Dorsolateral prefrontal cortex (tissue), 120 donors: ENCODE measurements at regions of chr1 and their contacts with region 1.

Region 1: DNA sequence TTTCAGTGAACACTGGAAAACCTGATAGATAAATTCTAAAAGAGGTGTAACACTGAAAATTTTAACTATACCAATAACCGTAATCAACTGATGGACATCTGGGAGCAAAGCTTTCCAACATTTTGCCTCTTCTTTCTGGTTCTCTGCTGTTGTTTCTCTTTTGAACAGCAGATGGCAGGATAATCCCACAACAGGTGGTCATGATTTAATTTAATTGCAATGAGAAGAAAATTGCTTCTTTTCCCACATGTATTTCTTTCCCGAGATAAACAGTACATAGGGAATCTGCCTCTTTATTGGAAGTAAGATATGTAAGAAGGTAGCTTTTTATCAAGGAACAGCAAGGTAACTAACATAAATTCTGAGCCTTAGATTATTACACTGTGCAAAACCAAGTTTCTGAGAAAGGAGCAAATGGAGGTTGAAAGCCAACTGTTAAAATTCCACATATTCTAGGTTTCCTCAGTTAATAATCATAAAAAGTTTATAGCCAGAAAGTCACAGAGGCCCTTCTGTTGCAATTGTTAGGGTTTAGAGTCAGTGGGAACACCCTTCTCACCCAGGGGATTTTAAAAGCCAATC is 72.9 kb downstream of the RPS6KA1 start:
- DNase-seq: peak in 2 of 10 donors; percentile 31 to 42
- H3K4me3 ChIP-seq: peak overlapping the region in 3 of 59 donors; percentile 0 to 39 (median 34)
- H3K27ac ChIP-seq: peak overlapping the region in 2 of 59 donors; percentile 4 to 5
- H3K27me3 ChIP-seq: no peaks in the 10 kb centered on the region
- CTCF ChIP-seq: peak; percentile 82 to 99 (median 94)

Region 2: DNA sequence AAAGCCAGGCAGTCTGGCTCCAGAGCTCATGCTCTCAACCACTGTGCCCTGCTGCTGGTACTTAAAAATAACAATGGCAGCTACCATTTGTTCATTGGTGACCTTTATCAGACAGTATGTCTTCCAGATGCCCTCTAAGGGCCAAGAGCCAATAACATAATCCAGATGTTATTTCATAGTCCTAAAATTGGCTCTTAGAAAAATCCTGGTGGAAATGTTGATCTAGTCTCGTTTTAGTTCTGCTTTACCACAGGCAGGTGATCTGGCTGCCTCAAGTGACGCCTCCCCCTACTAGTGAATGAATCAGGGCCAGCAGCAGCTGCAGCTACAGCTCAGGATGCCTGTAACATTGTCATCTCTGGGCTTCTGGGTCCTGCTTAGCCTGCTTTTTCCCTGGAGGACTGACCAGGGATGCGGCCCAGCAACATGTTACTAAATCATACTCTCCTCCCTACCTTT is 142.9 kb before region 1 on chr1:
- intact Hi-C with region 1: no loop called
- DNase-seq: peak in 1 of 10 donors; percentile 14
- H3K4me3 ChIP-seq: no peak overlapping the region
- H3K27ac ChIP-seq: no peak overlapping the region
- H3K27me3 ChIP-seq: no peaks in the 10 kb centered on the region
- CTCF ChIP-seq: no peak

Region 3: GRCh38 chr1:26524181-26524580 is 78.3 kb before region 1 on chr1:
- intact Hi-C with region 1: no loop called
- DNase-seq: no peak
- H3K4me3 ChIP-seq: no peak overlapping the region
- H3K27ac ChIP-seq: no peak overlapping the region
- H3K27me3 ChIP-seq: no peaks in the 10 kb centered on the region
- CTCF ChIP-seq: no peak

Region 4: DNA sequence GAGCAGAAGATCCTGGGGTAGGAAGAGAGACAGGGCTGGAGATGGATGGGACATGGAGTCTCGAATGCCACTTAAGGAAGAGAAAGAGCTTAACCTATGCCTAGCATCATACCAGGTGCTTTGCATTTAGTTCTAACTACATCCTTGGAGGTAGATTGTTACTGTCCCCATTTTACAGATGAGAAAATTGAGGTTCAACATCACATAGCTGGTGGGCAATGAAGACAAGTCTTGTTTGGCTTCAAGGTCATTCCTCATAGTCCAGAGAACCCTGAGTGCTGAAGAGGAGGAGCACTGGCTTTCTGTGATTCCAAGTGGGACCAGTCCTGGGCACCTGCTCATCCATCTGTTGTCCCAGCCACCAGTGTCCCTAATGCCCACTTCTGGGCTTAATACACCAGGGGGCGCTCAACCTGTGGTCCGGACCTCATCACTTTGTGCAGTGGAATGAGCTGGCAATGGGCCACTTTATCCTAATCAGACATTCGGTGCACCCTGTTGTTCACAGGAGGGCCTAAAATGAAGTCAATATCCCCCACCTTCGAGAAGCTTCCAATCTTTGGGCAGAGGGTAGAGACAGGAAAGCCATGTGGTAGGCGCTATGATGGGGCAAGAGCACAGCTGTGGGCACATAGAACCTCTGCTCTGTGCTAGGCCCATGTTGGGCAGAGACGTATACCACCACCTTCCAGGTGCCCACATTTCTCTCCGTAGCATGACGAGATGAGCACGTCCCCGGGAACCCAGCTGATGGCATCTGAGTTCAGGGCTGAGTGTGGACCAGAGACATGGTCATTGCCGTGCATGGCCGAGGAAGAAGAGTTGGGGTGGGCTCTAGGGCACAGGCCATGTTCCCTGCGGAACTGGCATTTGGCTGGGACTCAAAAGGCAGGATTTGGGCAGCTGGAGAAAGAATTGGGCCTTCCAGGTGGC is 63.7 kb before region 1 on chr1:
- intact Hi-C with region 1: loop called (anchors 2 to 5 kb)
- DNase-seq: peak in 2 of 10 donors; percentile 51 to 53
- H3K4me3 ChIP-seq: no peak overlapping the region
- H3K27ac ChIP-seq: peak overlapping the region in 56 of 59 donors; percentile 9 to 94 (median 80)
- H3K27me3 ChIP-seq: no peaks in the 10 kb centered on the region
- CTCF ChIP-seq: peak in 47 of 56 donors; percentile 3 to 55 (median 35)

Region 5: DNA sequence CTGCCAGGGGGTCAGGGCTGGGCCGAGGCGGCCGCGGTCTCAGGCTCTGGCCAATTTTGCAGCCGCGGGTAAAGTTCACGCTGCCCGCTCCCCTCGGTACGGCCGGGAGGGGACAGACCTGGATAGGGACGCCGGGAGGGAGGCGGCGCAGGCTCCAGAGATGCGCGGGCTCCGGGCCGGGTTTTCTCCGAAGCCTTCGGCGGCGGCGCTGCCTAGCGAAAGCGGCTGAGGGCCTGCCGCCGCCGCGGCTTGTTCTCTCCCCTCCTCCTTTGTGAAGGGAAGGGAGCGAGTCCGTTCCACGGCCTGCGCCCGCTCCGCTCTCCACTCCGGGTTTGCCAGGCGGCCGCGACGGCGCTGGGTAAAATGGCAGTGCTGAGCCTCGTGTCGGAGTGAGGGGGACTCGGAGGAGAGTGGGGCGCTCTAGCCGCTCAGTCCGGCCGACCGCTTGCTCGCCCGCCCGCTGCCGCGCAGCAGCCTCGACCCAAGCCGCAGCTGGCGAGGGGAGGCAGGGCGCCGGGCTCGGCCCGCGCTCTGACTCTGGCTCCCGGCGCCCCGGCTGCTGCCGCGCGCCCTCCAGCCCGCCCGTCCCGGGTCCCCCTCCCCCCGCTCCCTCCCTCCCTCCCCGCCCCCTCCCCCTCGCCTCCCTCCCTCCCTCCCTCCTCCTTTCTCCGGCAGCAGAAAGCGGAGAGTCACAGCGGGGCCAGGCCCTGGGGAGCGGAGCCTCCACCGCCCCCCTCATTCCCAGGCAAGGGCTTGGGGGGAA is 93.1 kb after region 1 on chr1 and contains the start of gene ARID1A:
- intact Hi-C with region 1: loop called in 1 of 2 experiments (anchors 5 kb)
- DNase-seq: peak; percentile 86 to 95 (median 92)
- H3K4me3 ChIP-seq: peak within 1 kb of the TSS; percentile 65 to 97 (median 89)
- H3K27ac ChIP-seq: peak within 1 kb of the TSS; percentile 87 to 100 (median 98)
- H3K27me3 ChIP-seq: no peaks in the 10 kb centered on the region
- CTCF ChIP-seq: peak in 45 of 56 donors; percentile 15 to 56 (median 35)
- total RNA-seq, gene ARID1A: 65.3 to 158 (median 93.3) TPM

Region 6: GRCh38 chr1:26864610-26865527 is 262.4 kb after region 1 on chr1:
- intact Hi-C with region 1: loop called in 1 of 2 experiments (anchors 10 kb)
- DNase-seq: peak; percentile 92 to 98 (median 96)
- H3K4me3 ChIP-seq: peak overlapping the region; percentile 48 to 93 (median 76)
- H3K27ac ChIP-seq: peak overlapping the region; percentile 9 to 99 (median 90)
- H3K27me3 ChIP-seq: no peaks in the 10 kb centered on the region
- CTCF ChIP-seq: peak in 42 of 56 donors; percentile 9 to 64 (median 37)